Panc1 (cell line): ENCODE measurements at regions of chr1 and their contacts with region 1.

Region 1: DNA sequence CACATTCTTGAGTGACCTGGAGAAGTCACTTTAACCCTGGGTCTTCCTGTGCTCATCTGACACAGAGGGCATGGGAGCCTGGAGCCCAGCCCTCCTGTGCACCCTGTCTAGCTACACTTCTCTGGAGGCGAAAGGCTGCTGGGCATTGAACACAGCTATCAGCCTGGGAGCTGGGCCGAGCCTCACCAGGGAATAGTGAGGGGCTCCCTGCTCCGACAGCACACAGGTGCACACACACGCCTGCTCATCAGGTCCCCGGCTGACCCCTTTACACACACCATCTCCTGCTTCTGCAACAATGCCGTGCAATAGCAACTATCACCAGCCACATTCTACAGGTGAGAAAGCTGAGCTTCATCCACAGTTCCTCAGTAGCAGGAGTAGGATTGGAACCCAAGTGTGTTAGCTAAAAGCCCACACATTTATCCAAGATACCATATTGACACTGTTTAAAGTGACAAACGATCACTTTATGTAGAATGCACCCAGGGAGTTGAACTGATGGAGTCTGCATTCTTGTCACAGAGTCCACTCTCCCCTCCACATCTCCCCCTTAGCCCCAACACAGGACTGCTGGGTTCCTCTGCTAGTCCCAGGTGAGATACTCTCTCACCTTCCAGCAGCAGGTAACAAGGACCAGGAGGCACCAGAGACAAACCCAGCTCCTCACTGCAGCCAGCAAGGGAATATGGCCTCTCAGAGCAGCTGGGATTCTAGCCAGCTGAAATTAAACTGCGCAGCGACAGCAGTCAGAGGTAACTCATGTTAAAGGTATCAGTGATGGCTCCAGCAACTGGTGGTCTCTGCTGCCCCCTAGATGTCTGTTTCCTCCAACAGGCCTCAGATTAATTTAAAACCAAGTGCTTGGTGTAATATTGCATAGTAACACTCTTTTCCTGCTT is 18.3 kb upstream of the CAPN8 start:
- DNase-seq: peak; percentile 67
- ATAC-seq: peak; percentile 92
- H3K4me3 ChIP-seq: no peak overlapping the region
- H3K27ac ChIP-seq: no peak overlapping the region
- H3K4me1 ChIP-seq: no peaks in the 10 kb centered on the region
- H3K27me3 ChIP-seq: no peaks in the 10 kb centered on the region
- CTCF ChIP-seq: peak; percentile 89

Region 2: GRCh38 chr1:223133824-223134435 is 549.9 kb before region 1 on chr1:
- CTCF ChIA-PET with region 1: interaction called, 16 read pairs
- POLR2A ChIA-PET with region 1: no interaction called
- in situ Hi-C with region 1: no loop called
- intact Hi-C with region 1: loop called (anchors 2 kb)
- DNase-seq: no peak
- ATAC-seq: peak; percentile 95
- H3K4me3 ChIP-seq: peak overlapping the region; percentile 19 to 41
- H3K27ac ChIP-seq: no peak overlapping the region
- H3K4me1 ChIP-seq: peaks cover 9% of the 10 kb centered on the region
- H3K27me3 ChIP-seq: peaks cover 22% of the 10 kb centered on the region
- CTCF ChIP-seq: peak; percentile 98

Region 3: GRCh38 chr1:223411309-223411708 is 272.5 kb before region 1 on chr1:
- CTCF ChIA-PET with region 1: interaction called, 10 read pairs
- POLR2A ChIA-PET with region 1: no interaction called
- in situ Hi-C with region 1: no loop called
- intact Hi-C with region 1: no loop called
- DNase-seq: no peak
- ATAC-seq: no peak
- H3K4me3 ChIP-seq: no peak overlapping the region
- H3K27ac ChIP-seq: no peak overlapping the region
- H3K4me1 ChIP-seq: no peaks in the 10 kb centered on the region
- H3K27me3 ChIP-seq: peaks cover 14% of the 10 kb centered on the region
- CTCF ChIP-seq: no peak

Region 4: GRCh38 chr1:223531742-223532341 is 152.0 kb before region 1 on chr1:
- CTCF ChIA-PET with region 1: interaction called, 3 read pairs
- POLR2A ChIA-PET with region 1: no interaction called
- in situ Hi-C with region 1: no loop called
- intact Hi-C with region 1: loop called (anchors 2 kb)
- DNase-seq: peak; percentile 58
- ATAC-seq: peak; percentile 88
- H3K4me3 ChIP-seq: no peak overlapping the region
- H3K27ac ChIP-seq: no peak overlapping the region
- H3K4me1 ChIP-seq: no peaks in the 10 kb centered on the region
- H3K27me3 ChIP-seq: peaks cover 4% of the 10 kb centered on the region
- CTCF ChIP-seq: peak; percentile 94

Region 5: DNA sequence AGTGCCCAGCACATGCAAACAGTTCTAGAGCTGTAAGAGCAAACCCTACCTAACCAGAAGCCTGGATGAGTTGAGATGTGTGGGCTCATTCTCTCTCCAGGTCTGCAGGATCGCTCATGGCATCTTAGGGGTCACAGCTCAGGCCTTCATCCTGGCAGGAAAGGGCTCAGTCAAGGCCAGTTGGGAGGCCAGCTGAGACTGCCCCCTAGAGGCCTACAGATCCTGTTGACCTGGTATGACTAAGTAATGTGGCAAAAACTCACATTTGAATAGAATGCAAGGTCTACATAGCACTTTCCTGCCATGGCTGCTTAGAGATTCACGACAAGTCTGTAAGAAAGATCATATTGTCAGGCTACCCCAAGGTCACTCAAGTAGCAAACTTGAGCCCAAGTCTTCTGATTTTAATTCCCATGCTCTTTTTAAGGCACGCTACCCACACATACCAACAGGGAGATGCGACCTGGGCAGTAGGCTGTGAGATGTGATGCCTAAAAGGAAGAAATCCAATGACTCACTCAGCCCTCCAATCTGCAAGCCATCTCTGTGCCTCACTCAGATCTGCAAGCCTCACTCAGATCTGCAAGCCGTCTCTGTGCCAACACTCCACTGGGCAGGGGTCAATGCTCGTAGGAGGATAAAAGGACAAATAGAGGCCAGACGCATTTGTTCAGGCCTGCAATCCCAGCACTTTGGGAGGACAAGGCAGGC is 13.2 kb before region 1 on chr1:
- CTCF ChIA-PET with region 1: interaction called, 16 read pairs
- POLR2A ChIA-PET with region 1: no interaction called
- in situ Hi-C with region 1: no loop called
- intact Hi-C with region 1: no loop called
- DNase-seq: no peak
- ATAC-seq: peak; percentile 85
- H3K4me3 ChIP-seq: no peak overlapping the region
- H3K27ac ChIP-seq: no peak overlapping the region
- H3K4me1 ChIP-seq: no peaks in the 10 kb centered on the region; the same call in 1 of the 2 replicates
- H3K27me3 ChIP-seq: no peaks in the 10 kb centered on the region
- CTCF ChIP-seq: peak; percentile 78

Region 6: GRCh38 chr1:223748773-223749733 is 65.2 kb after region 1 on chr1:
- CTCF ChIA-PET with region 1: no interaction called
- POLR2A ChIA-PET with region 1: no interaction called
- in situ Hi-C with region 1: no loop called
- intact Hi-C with region 1: no loop called
- DNase-seq: no peak
- ATAC-seq: peak; percentile 76
- H3K4me3 ChIP-seq: peak overlapping the region; percentile 3 to 14; a peak in 2 of 4 replicates
- H3K27ac ChIP-seq: peak overlapping the region; percentile 62; the same call in 1 of the 2 replicates
- H3K4me1 ChIP-seq: peaks cover 14% of the 10 kb centered on the region
- H3K27me3 ChIP-seq: no peaks in the 10 kb centered on the region
- CTCF ChIP-seq: peak; percentile 99